ENCODE measurements at regions of chr4 and their contacts with region 1.

Region 1: GRCh38 chr4:113636438-113636818 is 125.1 kb downstream of the CAMK2D start:
- DNase-seq: peak in 7 of 9 donors; percentile 28 to 58 (median 38)
- ATAC-seq: peak; percentile 79
- H3K4me3 ChIP-seq: peak overlapping the region; percentile 5
- H3K4me3 Mint-ChIP-seq: peak overlapping the region; percentile 0 to 79 (median 66)
- H3K27ac ChIP-seq: no peak overlapping the region
- H3K27ac Mint-ChIP-seq: peak overlapping the region; percentile 20 to 89 (median 70)
- H3K4me1 ChIP-seq: peaks cover 15 to 23% of the 10 kb centered on the region in 2 donors
- H3K4me1 Mint-ChIP-seq: peaks cover 31 to 61% (median 51%) of the 10 kb centered on the region in 7 donors
- H3K27me3 ChIP-seq: no peaks in the 10 kb centered on the region
- H3K27me3 Mint-ChIP-seq: no peaks in the 10 kb centered on the region

Region 2: GRCh38 chr4:113394730-113395530 is 241.5 kb before region 1 on chr4:
- CTCF ChIA-PET with region 1: no interaction called
- POLR2A ChIA-PET with region 1: no interaction called
- intact Hi-C with region 1: loop called (anchors 2 to 10 kb)
- DNase-seq: peak in 8 of 9 donors; percentile 35 to 77 (median 66)
- ATAC-seq: peak; percentile 90
- H3K4me3 ChIP-seq: no peak overlapping the region
- H3K4me3 Mint-ChIP-seq: no peak overlapping the region
- H3K27ac ChIP-seq: no peak overlapping the region
- H3K27ac Mint-ChIP-seq: no peak overlapping the region
- H3K4me1 ChIP-seq: no peaks in the 10 kb centered on the region
- H3K4me1 Mint-ChIP-seq: peaks cover 0 to 2% (median 0%) of the 10 kb centered on the region in 7 donors
- H3K27me3 ChIP-seq: no peaks in the 10 kb centered on the region
- H3K27me3 Mint-ChIP-seq: peaks cover 0 to 7% (median 4%) of the 10 kb centered on the region in 5 donors

Region 3: GRCh38 chr4:113566015-113566795 is 70.2 kb before region 1 on chr4:
- CTCF ChIA-PET with region 1: no interaction called
- POLR2A ChIA-PET with region 1: no interaction called
- intact Hi-C with region 1: loop called in 1 of 2 experiments (anchors 5 kb)
- DNase-seq: no peak
- ATAC-seq: no peak
- H3K4me3 ChIP-seq: no peak overlapping the region
- H3K4me3 Mint-ChIP-seq: peak overlapping the region in 6 of 10 donors; percentile 3 to 31 (median 14)
- H3K27ac ChIP-seq: no peak overlapping the region
- H3K27ac Mint-ChIP-seq: peak overlapping the region in 6 of 9 donors; percentile 1 to 49 (median 15)
- H3K4me1 ChIP-seq: peaks cover 18 to 22% of the 10 kb centered on the region in 2 donors
- H3K4me1 Mint-ChIP-seq: peaks cover 29 to 66% (median 49%) of the 10 kb centered on the region in 7 donors
- H3K27me3 ChIP-seq: no peaks in the 10 kb centered on the region
- H3K27me3 Mint-ChIP-seq: no peaks in the 10 kb centered on the region

Region 4: DNA sequence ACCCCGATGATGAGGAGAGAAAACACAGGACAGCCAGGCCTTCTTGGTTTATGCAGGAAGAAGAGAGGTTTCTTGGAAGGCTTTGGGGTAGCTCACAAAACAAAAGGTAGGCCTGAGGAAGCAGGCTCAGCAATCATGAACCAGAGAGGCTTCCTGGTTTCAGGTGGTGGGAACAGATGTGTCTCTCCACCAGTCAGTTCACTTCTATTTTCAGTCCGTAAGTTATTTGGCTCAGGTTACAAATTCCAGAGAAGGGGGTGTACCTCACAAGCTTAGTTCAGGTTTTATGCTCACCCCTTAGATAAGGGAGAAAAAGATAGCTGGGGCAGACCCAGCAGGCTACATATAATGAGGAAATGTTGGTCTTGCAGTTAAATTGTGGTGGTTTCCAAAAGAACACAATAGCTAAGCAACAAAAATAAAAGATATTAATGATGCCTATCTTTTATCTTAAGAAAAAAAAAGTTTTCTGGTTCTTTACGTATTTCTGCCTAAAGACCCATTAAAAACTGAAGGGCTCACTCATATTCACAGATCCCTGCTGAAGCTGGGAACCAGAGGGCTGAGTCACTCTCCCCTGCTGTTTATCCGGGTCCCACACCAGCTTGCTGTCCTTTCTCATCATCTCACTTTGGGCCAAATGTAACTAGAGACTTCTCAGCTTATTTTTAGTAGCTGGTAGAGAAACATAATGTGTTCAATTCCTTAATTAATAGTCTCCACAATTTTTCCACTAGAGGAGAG is 51.8 kb before region 1 on chr4:
- CTCF ChIA-PET with region 1: no interaction called
- POLR2A ChIA-PET with region 1: no interaction called
- intact Hi-C with region 1: no loop called
- DNase-seq: no peak
- ATAC-seq: no peak
- H3K4me3 ChIP-seq: no peak overlapping the region
- H3K4me3 Mint-ChIP-seq: no peak overlapping the region
- H3K27ac ChIP-seq: no peak overlapping the region
- H3K27ac Mint-ChIP-seq: peak overlapping the region in 2 of 9 donors; percentile 15 to 20
- H3K4me1 ChIP-seq: peaks cover 0 to 2% of the 10 kb centered on the region in 2 donors
- H3K4me1 Mint-ChIP-seq: peaks cover 10 to 53% (median 26%) of the 10 kb centered on the region in 7 donors
- H3K27me3 ChIP-seq: no peaks in the 10 kb centered on the region
- H3K27me3 Mint-ChIP-seq: no peaks in the 10 kb centered on the region

Region 5: DNA sequence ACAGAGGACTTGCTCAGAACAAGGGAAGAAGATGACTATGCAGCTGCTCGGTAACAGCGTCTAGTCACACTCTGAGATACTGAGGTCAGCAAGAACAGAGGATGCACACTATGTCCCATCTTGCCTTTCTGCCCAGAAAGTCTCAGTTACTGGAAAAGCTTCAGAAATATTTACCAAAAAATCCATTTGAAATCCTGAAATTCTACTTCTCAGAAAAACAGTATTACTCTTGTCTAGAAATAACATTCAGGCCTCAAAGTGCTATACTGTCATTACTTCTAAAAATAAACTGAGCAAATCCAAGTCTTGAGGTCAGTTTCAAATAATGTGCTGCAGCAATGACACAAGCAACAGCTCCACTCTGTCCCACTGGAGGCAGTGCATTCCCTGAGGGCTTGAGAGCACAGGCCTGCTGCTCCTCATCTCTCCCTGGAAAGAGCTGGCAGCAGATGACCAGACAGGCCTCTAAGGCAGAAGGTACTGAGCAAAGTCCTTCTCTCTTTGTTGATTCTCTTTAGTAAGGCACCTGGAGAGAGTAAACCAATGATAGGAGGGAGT is 48.2 kb after region 1 on chr4:
- CTCF ChIA-PET with region 1: no interaction called
- POLR2A ChIA-PET with region 1: interaction called, 3 read pairs
- intact Hi-C with region 1: loop called (anchors 1 to 2 kb)
- DNase-seq: peak in 1 of 9 donors; percentile 28
- ATAC-seq: no peak
- H3K4me3 ChIP-seq: no peak overlapping the region
- H3K4me3 Mint-ChIP-seq: peak overlapping the region in 7 of 10 donors; percentile 3 to 83 (median 73)
- H3K27ac ChIP-seq: peak overlapping the region; percentile 50
- H3K27ac Mint-ChIP-seq: peak overlapping the region; percentile 81 to 93 (median 90)
- H3K4me1 ChIP-seq: peaks cover 27 to 30% of the 10 kb centered on the region in 2 donors
- H3K4me1 Mint-ChIP-seq: peaks cover 20 to 66% (median 62%) of the 10 kb centered on the region in 7 donors
- H3K27me3 ChIP-seq: no peaks in the 10 kb centered on the region
- H3K27me3 Mint-ChIP-seq: no peaks in the 10 kb centered on the region

Region 6: GRCh38 chr4:113781439-113782040 is 145.1 kb after region 1 on chr4:
- CTCF ChIA-PET with region 1: no interaction called
- POLR2A ChIA-PET with region 1: no interaction called
- intact Hi-C with region 1: loop called in 1 of 2 experiments (anchors 1 kb)
- DNase-seq: peak in 5 of 9 donors; percentile 21 to 28 (median 27)
- ATAC-seq: peak; percentile 41
- H3K4me3 ChIP-seq: no peak overlapping the region
- H3K4me3 Mint-ChIP-seq: no peak overlapping the region
- H3K27ac ChIP-seq: no peak overlapping the region
- H3K27ac Mint-ChIP-seq: no peak overlapping the region
- H3K4me1 ChIP-seq: no peaks in the 10 kb centered on the region
- H3K4me1 Mint-ChIP-seq: peaks cover 5 to 24% (median 12%) of the 10 kb centered on the region in 7 donors
- H3K27me3 ChIP-seq: no peaks in the 10 kb centered on the region
- H3K27me3 Mint-ChIP-seq: no peaks in the 10 kb centered on the region

Region 7: GRCh38 chr4:113908829-113909228 is 272.4 kb after region 1 on chr4:
- CTCF ChIA-PET with region 1: no interaction called
- POLR2A ChIA-PET with region 1: no interaction called
- intact Hi-C with region 1: loop called (anchors 1 to 5 kb)
- DNase-seq: peak in 5 of 9 donors; percentile 10 to 31 (median 26)
- ATAC-seq: no peak
- H3K4me3 ChIP-seq: no peak overlapping the region
- H3K4me3 Mint-ChIP-seq: no peak overlapping the region
- H3K27ac ChIP-seq: no peak overlapping the region
- H3K27ac Mint-ChIP-seq: peak overlapping the region in 2 of 9 donors; percentile 2 to 7
- H3K4me1 ChIP-seq: peaks cover 12 to 24% of the 10 kb centered on the region in 2 donors
- H3K4me1 Mint-ChIP-seq: peaks cover 6 to 57% (median 46%) of the 10 kb centered on the region in 7 donors
- H3K27me3 ChIP-seq: no peaks in the 10 kb centered on the region
- H3K27me3 Mint-ChIP-seq: no peaks in the 10 kb centered on the region

Region 8: DNA sequence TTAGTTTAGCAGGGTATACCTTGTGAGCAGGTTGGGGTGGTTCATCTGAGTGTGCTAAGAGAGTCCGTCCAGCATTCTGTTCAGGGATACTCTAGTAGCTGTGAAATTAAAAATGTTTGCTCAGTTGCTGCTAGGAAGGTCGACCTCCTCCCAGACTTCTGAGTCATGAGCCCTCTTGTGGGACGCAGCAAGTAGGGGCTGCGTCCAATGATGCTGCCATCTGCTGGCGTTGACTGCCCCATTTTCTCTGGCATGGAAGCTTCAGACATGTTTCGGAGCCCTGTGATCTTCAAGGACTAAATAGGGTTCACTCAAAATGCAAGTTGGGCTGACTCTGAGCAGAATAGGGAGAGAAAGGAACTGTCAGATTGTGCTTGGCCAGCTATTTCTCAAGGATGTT is 544.1 kb after region 1 on chr4:
- CTCF ChIA-PET with region 1: no interaction called
- POLR2A ChIA-PET with region 1: no interaction called
- intact Hi-C with region 1: loop called in 1 of 2 experiments (anchors 1 kb)
- DNase-seq: peak in 6 of 9 donors; percentile 1 to 27 (median 16)
- ATAC-seq: peak; percentile 29
- H3K4me3 ChIP-seq: no peak overlapping the region
- H3K4me3 Mint-ChIP-seq: no peak overlapping the region
- H3K27ac ChIP-seq: no peak overlapping the region
- H3K27ac Mint-ChIP-seq: no peak overlapping the region
- H3K4me1 ChIP-seq: no peaks in the 10 kb centered on the region
- H3K4me1 Mint-ChIP-seq: no peaks in the 10 kb centered on the region
- H3K27me3 ChIP-seq: no peaks in the 10 kb centered on the region
- H3K27me3 Mint-ChIP-seq: peaks cover 0 to 8% (median 0%) of the 10 kb centered on the region in 5 donors

Region 9: DNA sequence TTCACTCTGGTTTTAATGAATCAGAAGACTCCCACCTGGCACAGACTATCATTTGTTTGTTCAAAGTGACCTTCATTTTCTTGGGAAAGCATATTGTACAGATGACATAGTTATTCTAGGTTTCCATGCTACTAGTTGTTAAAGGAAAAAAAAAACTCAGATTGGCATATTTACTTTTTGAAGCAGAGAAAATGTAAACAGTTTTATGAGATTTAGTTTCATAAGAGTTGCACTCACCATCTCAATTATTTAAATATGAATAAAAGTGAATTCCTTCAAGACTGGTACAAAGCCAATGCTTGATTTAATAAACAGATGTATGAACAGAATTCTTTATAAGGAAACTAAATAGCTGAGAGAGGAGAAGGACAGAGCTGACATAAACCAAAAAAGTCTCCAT is 681.9 kb after region 1 on chr4:
- CTCF ChIA-PET with region 1: no interaction called
- POLR2A ChIA-PET with region 1: no interaction called
- intact Hi-C with region 1: no loop called
- DNase-seq: no peak
- ATAC-seq: no peak
- H3K4me3 ChIP-seq: no peak overlapping the region
- H3K4me3 Mint-ChIP-seq: no peak overlapping the region
- H3K27ac ChIP-seq: no peak overlapping the region
- H3K27ac Mint-ChIP-seq: no peak overlapping the region
- H3K4me1 ChIP-seq: no peaks in the 10 kb centered on the region
- H3K4me1 Mint-ChIP-seq: no peaks in the 10 kb centered on the region
- H3K27me3 ChIP-seq: no peaks in the 10 kb centered on the region
- H3K27me3 Mint-ChIP-seq: peaks cover 0 to 17% (median 3%) of the 10 kb centered on the region in 5 donors